Heart right ventricle (tissue), 16 donors: ENCODE measurements at regions of chrX and their contacts with region 1.

Region 1: DNA sequence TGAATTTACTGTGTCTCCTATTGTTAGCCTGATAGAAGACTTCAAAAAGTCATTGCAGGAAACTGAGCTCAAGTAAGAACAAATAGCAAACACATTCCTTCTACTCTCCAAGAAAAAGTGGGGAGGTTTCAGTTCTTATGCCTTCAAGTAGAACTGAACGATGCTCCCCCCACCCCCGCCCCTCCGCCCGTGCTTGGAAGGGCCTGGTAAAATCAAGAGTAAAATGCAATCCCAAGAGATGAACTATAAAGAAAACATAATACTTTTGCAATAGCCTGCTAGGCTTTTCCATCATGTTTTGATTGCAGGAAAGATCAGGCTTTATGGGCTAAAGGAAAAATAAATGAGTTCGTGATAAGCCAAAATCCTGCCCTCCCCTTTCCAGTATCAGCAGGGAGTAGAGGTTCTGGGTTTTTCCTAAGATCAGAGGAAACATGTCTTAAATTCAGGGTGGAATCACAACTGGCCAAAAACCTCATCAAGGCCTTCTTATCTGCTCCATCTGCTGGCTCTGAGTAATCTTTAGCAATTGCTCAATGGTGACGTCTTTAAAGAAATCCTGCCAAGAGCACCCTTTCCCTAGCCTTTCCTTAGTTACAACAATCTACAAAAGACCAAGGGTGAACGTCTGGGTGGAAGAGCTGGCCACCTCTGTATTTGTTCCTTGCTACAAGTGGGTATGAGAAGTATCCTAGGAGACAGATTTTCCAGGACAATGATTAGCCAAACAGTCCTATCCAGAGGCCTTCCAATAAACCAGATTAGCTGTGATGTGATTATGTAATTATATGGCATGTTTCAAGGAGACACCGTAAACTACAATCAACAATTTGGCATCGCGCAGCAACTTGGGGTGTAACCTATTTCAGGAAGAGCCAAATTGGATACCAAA is 66.3 kb upstream of the FAM9C start:
- DNase-seq: peak; percentile 30 to 66
- ATAC-seq: peak; percentile 77 to 95 (median 90)
- H3K4me3 ChIP-seq: no peak overlapping the region
- H3K27ac ChIP-seq: peak overlapping the region; percentile 22 to 80 (median 64)
- H3K4me1 ChIP-seq: peaks cover 0 to 32% (median 15%) of the 10 kb centered on the region in 9 donors
- H3K27me3 ChIP-seq: peaks cover 0 to 9% (median 0%) of the 10 kb centered on the region in 7 donors
- CTCF ChIP-seq: no peak

Region 2: DNA sequence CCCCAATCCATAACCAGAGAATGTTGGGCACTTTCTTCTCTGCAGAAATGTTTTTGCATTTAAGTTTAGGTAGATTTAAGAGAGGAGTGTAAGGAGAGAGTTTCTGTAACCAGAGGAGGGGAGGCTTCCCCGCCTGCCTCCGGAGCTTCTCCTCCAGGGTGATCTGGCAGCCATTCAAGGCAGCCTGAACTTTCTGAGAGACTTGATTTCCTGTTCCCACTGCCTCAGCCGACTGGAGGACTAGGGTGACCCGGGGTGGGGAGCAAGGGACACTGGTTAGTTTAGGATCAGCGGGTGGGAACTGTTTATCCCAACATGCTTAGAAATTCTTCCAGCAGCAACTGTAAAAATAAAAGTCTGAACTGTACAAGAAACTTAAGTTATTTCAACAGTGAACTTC is 81.3 kb before region 1 on chrX:
- intact Hi-C with region 1: loop called in 1 of 10 experiments (anchors 10 kb)
- DNase-seq: peak; percentile 33 to 71
- ATAC-seq: peak; percentile 55 to 90 (median 81)
- H3K4me3 ChIP-seq: peak overlapping the region in 2 of 10 donors; percentile 11 to 26
- H3K27ac ChIP-seq: peak overlapping the region; percentile 39 to 80 (median 70)
- H3K4me1 ChIP-seq: peaks cover 0 to 32% (median 21%) of the 10 kb centered on the region in 9 donors
- H3K27me3 ChIP-seq: peaks cover 0 to 69% (median 0%) of the 10 kb centered on the region in 7 donors
- CTCF ChIP-seq: no peak

Region 3: GRCh38 chrX:13159886-13160285 is 49.2 kb after region 1 on chrX:
- intact Hi-C with region 1: loop called in 1 of 10 experiments (anchors 2 kb)
- DNase-seq: no peak
- ATAC-seq: no peak
- H3K4me3 ChIP-seq: no peak overlapping the region
- H3K27ac ChIP-seq: peak overlapping the region in 8 of 10 donors; percentile 48 to 81 (median 70)
- H3K4me1 ChIP-seq: peaks cover 0 to 34% (median 8%) of the 10 kb centered on the region in 9 donors
- H3K27me3 ChIP-seq: peaks cover 0 to 36% (median 0%) of the 10 kb centered on the region in 7 donors
- CTCF ChIP-seq: no peak

Region 4: GRCh38 chrX:13212191-13212651 is 101.5 kb after region 1 on chrX:
- intact Hi-C with region 1: loop called in 1 of 10 experiments (anchors 5 kb)
- DNase-seq: no peak
- ATAC-seq: peak in 7 of 8 donors; percentile 62 to 83 (median 74)
- H3K4me3 ChIP-seq: no peak overlapping the region
- H3K27ac ChIP-seq: peak overlapping the region in 8 of 10 donors; percentile 15 to 78 (median 51)
- H3K4me1 ChIP-seq: peaks cover 0 to 21% (median 9%) of the 10 kb centered on the region in 9 donors
- H3K27me3 ChIP-seq: peaks cover 0 to 16% (median 0%) of the 10 kb centered on the region in 7 donors
- CTCF ChIP-seq: no peak

Region 5: DNA sequence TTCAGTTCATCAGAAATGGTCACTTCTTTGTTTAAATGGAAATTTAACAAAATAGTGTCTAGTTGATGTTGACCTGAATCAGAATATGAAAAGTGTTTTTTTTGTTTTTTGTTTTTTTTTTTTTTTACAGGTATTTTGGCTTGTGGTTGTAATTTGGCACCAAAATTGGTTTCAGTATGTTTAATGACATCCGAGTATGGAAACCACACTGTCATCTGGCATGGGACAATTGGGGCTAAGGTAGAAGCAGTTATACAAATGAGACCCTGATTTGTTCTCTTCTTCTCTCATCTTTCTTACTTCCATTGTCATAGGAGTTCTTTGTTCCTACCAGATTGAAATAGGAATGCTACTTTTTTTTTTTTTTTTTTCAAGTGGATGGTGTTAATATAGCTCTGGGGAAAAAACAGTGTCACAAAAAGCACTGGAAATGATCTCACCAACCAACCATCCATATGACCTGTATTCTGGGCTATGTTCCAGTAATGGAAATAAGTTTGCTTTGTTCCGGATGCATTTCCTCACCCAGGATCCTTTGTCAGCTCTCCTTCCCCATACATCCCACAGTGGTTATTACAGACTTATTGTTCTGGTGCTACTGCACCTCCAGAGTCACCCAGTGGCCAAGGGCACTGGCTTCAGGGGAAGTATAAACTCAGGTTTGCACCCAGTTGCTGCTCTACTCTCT is 113.3 kb after region 1 on chrX:
- intact Hi-C with region 1: loop called in 1 of 10 experiments (anchors 10 kb)
- DNase-seq: peak in 1 of 2 donors; percentile 25
- ATAC-seq: peak; percentile 81 to 97 (median 92)
- H3K4me3 ChIP-seq: no peak overlapping the region
- H3K27ac ChIP-seq: peak overlapping the region in 7 of 10 donors; percentile 32 to 73 (median 51)
- H3K4me1 ChIP-seq: peaks cover 0 to 21% (median 7%) of the 10 kb centered on the region in 9 donors
- H3K27me3 ChIP-seq: peaks cover 0 to 29% (median 0%) of the 10 kb centered on the region in 7 donors
- CTCF ChIP-seq: peak in 2 of 9 donors; percentile 13 to 23

Region 6: GRCh38 chrX:13428055-13428786 is 317.5 kb after region 1 on chrX:
- intact Hi-C with region 1: no loop called
- DNase-seq: no peak
- ATAC-seq: no peak
- H3K4me3 ChIP-seq: no peak overlapping the region
- H3K27ac ChIP-seq: no peak overlapping the region
- H3K4me1 ChIP-seq: peaks cover 4 to 15% (median 13%) of the 10 kb centered on the region in 9 donors
- H3K27me3 ChIP-seq: peaks cover 0 to 17% (median 0%) of the 10 kb centered on the region in 7 donors
- CTCF ChIP-seq: no peak

Region 7: GRCh38 chrX:13473442-13474163 is 362.9 kb after region 1 on chrX:
- intact Hi-C with region 1: loop called in 2 of 10 experiments (anchors 5 to 10 kb)
- DNase-seq: no peak
- ATAC-seq: peak; percentile 41 to 93 (median 84)
- H3K4me3 ChIP-seq: peak overlapping the region in 3 of 10 donors; percentile 0 to 29 (median 6)
- H3K27ac ChIP-seq: peak overlapping the region; percentile 41 to 88 (median 67)
- H3K4me1 ChIP-seq: peaks cover 0 to 32% (median 3%) of the 10 kb centered on the region in 9 donors
- H3K27me3 ChIP-seq: peaks cover 0 to 56% (median 0%) of the 10 kb centered on the region in 7 donors
- CTCF ChIP-seq: no peak